Panc1 (cell line): ENCODE measurements at regions of chr2 and their contacts with region 1.

Region 1: DNA sequence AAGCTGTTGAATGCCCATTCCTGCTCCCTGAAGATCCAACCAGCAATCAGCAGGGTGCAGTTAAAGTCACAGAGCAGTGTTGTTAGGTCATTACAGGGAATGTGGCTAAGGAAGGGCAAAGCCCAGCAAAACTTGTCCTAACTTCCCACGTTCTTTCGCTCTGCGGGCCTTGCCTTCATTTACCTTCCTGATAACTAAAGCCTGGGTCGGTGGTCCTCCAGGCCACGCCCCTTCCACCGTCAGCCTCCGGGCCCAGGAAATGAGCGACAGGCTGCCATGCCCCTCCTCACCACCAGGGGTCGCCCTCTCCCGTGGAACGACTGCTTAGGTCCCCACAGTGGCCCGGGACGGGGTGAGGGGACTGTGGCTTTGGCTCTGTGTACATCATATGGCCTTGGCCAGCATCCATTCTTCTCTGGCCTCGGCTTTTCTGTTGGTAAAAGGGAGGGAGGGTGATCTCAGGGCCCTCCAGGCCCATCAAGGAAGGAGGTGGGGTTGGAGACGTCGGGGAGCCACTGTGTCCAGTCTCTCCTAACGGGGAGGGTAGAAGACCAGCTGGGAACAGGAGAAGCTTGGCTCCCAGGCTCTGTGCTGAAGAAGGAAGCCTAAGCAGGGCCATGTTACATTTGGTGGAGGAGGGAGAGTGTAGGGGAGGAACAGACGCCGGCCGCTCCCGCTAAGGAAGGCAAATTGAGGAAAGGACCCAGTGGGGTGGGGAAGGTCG is 2.2 kb downstream of the SH2D6 start:
- DNase-seq: peak; percentile 81
- ATAC-seq: peak; percentile 76
- H3K4me3 ChIP-seq: peak overlapping the region in 1 of 2 experiments; percentile 26; a peak in 2 of 4 replicates
- H3K27ac ChIP-seq: peak overlapping the region; percentile 99
- H3K4me1 ChIP-seq: peaks cover 41% of the 10 kb centered on the region
- H3K27me3 ChIP-seq: no peaks in the 10 kb centered on the region
- CTCF ChIP-seq: peak; percentile 98

Region 2: GRCh38 chr2:85457877-85458316 is 37.2 kb after region 1 on chr2:
- CTCF ChIA-PET with region 1: no interaction called
- POLR2A ChIA-PET with region 1: no interaction called
- in situ Hi-C with region 1: no loop called
- intact Hi-C with region 1: no loop called
- DNase-seq: no peak
- ATAC-seq: peak; percentile 35; the same call in 1 of the 2 replicates
- H3K4me3 ChIP-seq: no peak overlapping the region
- H3K27ac ChIP-seq: peak overlapping the region; percentile 74
- H3K4me1 ChIP-seq: peaks cover 5% of the 10 kb centered on the region; the same call in 1 of the 2 replicates
- H3K27me3 ChIP-seq: no peaks in the 10 kb centered on the region
- CTCF ChIP-seq: no peak

Region 3: DNA sequence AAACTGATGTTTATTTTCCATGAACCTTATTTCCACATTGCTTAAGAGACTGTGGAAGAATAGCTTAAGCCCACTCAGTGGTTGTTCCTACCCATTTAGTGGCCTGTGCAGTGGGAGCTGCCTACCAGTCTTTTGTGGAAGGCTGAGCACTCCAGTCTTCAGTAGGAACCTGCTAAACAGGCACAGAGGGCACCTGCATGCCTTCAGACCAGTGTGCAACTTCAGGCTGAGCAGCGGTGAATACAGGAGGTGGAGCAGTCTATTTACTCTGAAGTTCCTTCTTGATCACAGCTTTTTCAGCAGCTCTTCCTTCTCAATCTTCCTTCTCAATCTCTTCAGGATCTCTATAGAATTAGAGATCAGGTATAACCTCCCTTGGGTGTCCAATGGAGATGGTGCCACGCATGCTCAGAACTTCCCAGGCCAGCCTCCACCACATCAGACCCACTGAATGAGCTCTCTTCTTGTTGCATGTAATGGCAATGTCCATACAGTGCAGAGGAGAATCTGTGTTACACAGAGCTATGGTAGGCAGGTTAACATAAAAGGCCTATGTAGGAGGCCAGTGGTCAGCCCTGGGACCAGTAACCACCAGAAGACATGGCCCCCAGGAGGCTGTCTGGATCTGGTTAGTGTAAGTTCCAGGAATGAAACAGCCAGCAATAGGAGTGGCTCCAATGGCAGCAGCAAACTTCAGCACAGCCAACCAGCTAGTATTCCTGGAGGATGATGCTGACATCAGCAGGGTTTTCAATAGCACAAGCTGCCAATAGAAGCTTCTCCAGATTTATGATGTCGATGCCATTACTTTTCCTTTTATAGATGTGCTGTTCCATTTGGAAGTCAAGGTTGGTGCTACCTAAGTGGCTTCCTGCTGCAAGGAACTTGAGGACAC is 70.4 kb after region 1 on chr2:
- CTCF ChIA-PET with region 1: no interaction called
- POLR2A ChIA-PET with region 1: interaction called, 3 read pairs
- in situ Hi-C with region 1: no loop called
- intact Hi-C with region 1: loop called (anchors 10 kb)
- DNase-seq: no peak
- ATAC-seq: peak; percentile 62
- H3K4me3 ChIP-seq: no peak overlapping the region
- H3K27ac ChIP-seq: peak overlapping the region; percentile 41; the same call in 1 of the 2 replicates
- H3K4me1 ChIP-seq: no peaks in the 10 kb centered on the region
- H3K27me3 ChIP-seq: no peaks in the 10 kb centered on the region
- CTCF ChIP-seq: no peak

Region 4: GRCh38 chr2:85538486-85539360 is 118.0 kb after region 1 on chr2 and contains the start of gene MAT2A:
- CTCF ChIA-PET with region 1: interaction called, 11 read pairs
- POLR2A ChIA-PET with region 1: interaction called, 10 read pairs
- in situ Hi-C with region 1: loop called (anchors 25 kb)
- intact Hi-C with region 1: loop called (anchors 2 kb)
- DNase-seq: no peak
- ATAC-seq: peak; percentile 82
- H3K4me3 ChIP-seq: peak within 1 kb of the TSS; percentile 99 to 100
- H3K27ac ChIP-seq: peak within 1 kb of the TSS; percentile 100
- H3K4me1 ChIP-seq: peaks cover 53% of the 10 kb centered on the region
- H3K27me3 ChIP-seq: no peaks in the 10 kb centered on the region
- CTCF ChIP-seq: peak; percentile 88
- total RNA-seq, gene MAT2A: 547 TPM

Region 5: DNA sequence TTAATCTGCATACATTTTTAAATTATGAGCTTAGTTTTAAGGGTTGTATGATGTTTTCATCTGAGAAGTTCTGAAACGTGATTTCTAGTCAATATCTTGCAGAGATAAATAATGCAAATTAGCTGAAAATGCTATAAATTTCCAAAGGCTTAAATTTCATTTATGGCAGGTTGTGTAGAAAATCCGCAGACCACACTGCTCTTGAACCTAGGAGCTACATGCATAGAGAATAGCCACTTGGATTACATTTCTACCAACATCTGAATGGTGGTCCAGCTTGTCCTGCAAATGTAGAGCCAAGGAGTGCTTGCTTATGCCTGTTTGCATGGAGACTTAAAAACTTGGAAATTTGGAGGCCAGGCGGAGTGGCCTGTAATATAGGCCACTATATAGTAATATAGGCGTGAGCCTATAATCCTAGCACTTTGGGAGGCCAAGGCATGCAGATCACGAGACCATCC is 125.1 kb after region 1 on chr2:
- CTCF ChIA-PET with region 1: interaction called, 13 read pairs
- POLR2A ChIA-PET with region 1: interaction called, 5 read pairs
- in situ Hi-C with region 1: loop called (anchors 25 kb)
- intact Hi-C with region 1: loop called (anchors 2 kb)
- DNase-seq: no peak
- ATAC-seq: no peak; the same call in 1 of the 2 replicates
- H3K4me3 ChIP-seq: no peak overlapping the region
- H3K27ac ChIP-seq: peak overlapping the region; percentile 100
- H3K4me1 ChIP-seq: peaks cover 85% of the 10 kb centered on the region
- H3K27me3 ChIP-seq: no peaks in the 10 kb centered on the region
- CTCF ChIP-seq: no peak

Region 6: GRCh38 chr2:85551698-85552678 is 131.3 kb after region 1 on chr2:
- CTCF ChIA-PET with region 1: interaction called, 13 read pairs
- POLR2A ChIA-PET with region 1: interaction called, 5 read pairs
- in situ Hi-C with region 1: loop called (anchors 25 kb)
- intact Hi-C with region 1: loop called (anchors 1 kb)
- DNase-seq: no peak
- ATAC-seq: peak; percentile 55
- H3K4me3 ChIP-seq: no peak overlapping the region
- H3K27ac ChIP-seq: peak overlapping the region; percentile 100
- H3K4me1 ChIP-seq: peaks cover 50% of the 10 kb centered on the region
- H3K27me3 ChIP-seq: no peaks in the 10 kb centered on the region
- CTCF ChIP-seq: peak; percentile 90

Region 7: GRCh38 chr2:85561317-85561979 is 140.8 kb after region 1 on chr2 and contains the start of gene GGCX:
- CTCF ChIA-PET with region 1: interaction called, 9 read pairs
- POLR2A ChIA-PET with region 1: interaction called, 13 read pairs
- in situ Hi-C with region 1: no loop called
- intact Hi-C with region 1: no loop called
- DNase-seq: no peak
- ATAC-seq: peak; percentile 97
- H3K4me3 ChIP-seq: peak within 1 kb of the TSS; percentile 71 to 95
- H3K27ac ChIP-seq: peak within 1 kb of the TSS; percentile 95
- H3K4me1 ChIP-seq: peaks cover 6% of the 10 kb centered on the region; the same call in 1 of the 2 replicates
- H3K27me3 ChIP-seq: no peaks in the 10 kb centered on the region
- CTCF ChIP-seq: no peak
- total RNA-seq, gene GGCX: 64.1 TPM